ENCODE measurements at regions of chr18 and their contacts with region 1.

Region 1: GRCh38 chr18:11518788-11519685 is 90.4 kb upstream of the SLC35G4 start:
- DNase-seq: no peak
- ATAC-seq: peak in 1 of 2 donors; percentile 60
- H3K4me3 ChIP-seq: no peak overlapping the region
- H3K27ac ChIP-seq: no peak overlapping the region
- H3K4me1 ChIP-seq: no peaks in the 10 kb centered on the region
- H3K27me3 ChIP-seq: no peaks in the 10 kb centered on the region
- CTCF ChIP-seq: peak in 4 of 5 experiments; percentile 38 to 65 (median 39)
- POLR2A ChIP-seq: no peak

Region 2: GRCh38 chr18:11178951-11179549 is 340.0 kb before region 1 on chr18:
- in situ Hi-C with region 1: loop called in 1 of 4 experiments (anchors 10 kb)
- intact Hi-C with region 1: loop called (anchors 10 kb)
- DNase-seq: peak; percentile 86 to 92
- ATAC-seq: peak; percentile 88
- H3K4me3 ChIP-seq: peak overlapping the region; percentile 13 to 32 (median 22)
- H3K27ac ChIP-seq: peak overlapping the region; percentile 88 to 94 (median 91)
- H3K4me1 ChIP-seq: peaks cover 45 to 48% of the 10 kb centered on the region in 2 donors
- H3K27me3 ChIP-seq: no peaks in the 10 kb centered on the region
- CTCF ChIP-seq: no peak
- POLR2A ChIP-seq: peak in 1 of 2 donors; percentile 41

Region 3: GRCh38 chr18:11387880-11388279 is 131.2 kb before region 1 on chr18:
- in situ Hi-C with region 1: no loop called
- intact Hi-C with region 1: loop called (anchors 10 kb)
- DNase-seq: peak; percentile 54 to 80
- ATAC-seq: peak; percentile 75 to 99
- H3K4me3 ChIP-seq: no peak overlapping the region
- H3K27ac ChIP-seq: no peak overlapping the region
- H3K4me1 ChIP-seq: no peaks in the 10 kb centered on the region
- H3K27me3 ChIP-seq: no peaks in the 10 kb centered on the region
- CTCF ChIP-seq: peak; percentile 44 to 87 (median 58)
- POLR2A ChIP-seq: no peak

Region 4: DNA sequence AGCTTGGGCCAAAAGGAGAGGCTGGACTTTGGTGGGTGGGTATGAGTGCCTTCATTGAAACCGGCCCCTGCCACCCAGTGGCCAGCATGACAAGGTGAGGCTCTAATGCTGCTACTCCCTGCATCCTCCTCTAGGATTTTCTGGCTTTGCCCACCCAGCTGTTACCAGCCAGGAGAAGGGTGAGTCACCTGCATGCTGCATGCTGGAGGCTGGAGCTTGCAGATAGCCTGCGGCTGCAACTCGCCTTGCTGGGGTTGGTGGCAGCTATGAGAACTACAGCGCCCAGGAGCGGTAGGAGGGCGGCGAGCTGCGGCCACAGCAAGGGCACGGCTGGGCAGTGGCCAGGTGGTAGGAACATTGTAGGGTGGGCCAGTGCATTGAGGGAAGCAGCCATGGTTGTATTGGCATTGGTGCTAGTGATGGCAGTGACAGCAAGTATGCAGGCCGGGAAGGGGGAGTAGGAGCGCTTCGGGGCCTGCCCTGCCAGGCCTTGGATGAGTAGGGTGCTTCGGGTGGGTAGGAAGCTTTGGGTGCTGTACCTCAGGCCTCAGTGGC is 15.0 kb after region 1 on chr18:
- in situ Hi-C with region 1: no loop called
- intact Hi-C with region 1: no loop called
- DNase-seq: no peak
- ATAC-seq: no peak
- H3K4me3 ChIP-seq: no peak overlapping the region
- H3K27ac ChIP-seq: no peak overlapping the region
- H3K4me1 ChIP-seq: no peaks in the 10 kb centered on the region
- H3K27me3 ChIP-seq: no peaks in the 10 kb centered on the region
- CTCF ChIP-seq: no peak
- POLR2A ChIP-seq: no peak

Measured in gastrocnemius medialis (tissue), 4 donors.